ENCODE measurements at regions of chr2 and their contacts with region 1.

Region 1: GRCh38 chr2:85728883-85729824 is 24.6 kb upstream of the ATOH8 start:
- DNase-seq: peak; percentile 83 to 93
- ATAC-seq: peak; percentile 96 to 99
- H3K4me3 ChIP-seq: 0 out of 3 replicates have a peak overlapping the region, but pooled peaks have one; percentile 11
- H3K27ac ChIP-seq: peak overlapping the region; percentile 68 to 70
- H3K4me1 ChIP-seq: peaks cover 24% of the 10 kb centered on the region
- CTCF ChIP-seq: peak; percentile 99
- EP300 ChIP-seq: peak in 1 of 2 experiments; percentile 51; a peak in 1 of 5 replicates
- POLR2A ChIP-seq: no peak
- RAD21 ChIP-seq: peak; percentile 100

Region 2: DNA sequence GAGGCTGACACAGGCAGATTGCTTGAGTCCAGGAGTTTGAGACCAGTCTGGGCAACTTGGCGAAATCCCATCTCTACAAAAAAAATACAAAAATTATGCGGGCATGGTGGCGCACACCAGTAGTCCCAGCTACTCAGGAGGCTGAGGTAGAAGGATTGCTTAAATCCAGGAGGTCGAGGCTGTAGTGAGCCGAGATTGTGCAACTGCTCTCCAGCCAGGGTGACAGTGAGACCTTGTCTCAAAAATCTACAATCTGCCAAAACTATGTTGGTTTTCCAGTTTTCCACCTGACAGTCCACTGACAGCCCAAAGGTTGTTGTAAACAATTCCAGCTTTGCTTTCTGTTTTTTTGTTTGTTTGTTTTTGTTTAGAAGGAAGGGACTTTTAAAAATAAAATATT is 706.9 kb before region 1 on chr2:
- CTCF ChIA-PET with region 1: no interaction called
- POLR2A ChIA-PET with region 1: no interaction called
- DNase-seq: no peak
- ATAC-seq: no peak
- H3K4me3 ChIP-seq: no peak overlapping the region
- H3K27ac ChIP-seq: no peak overlapping the region
- H3K4me1 ChIP-seq: peaks cover 31% of the 10 kb centered on the region
- CTCF ChIP-seq: no peak
- EP300 ChIP-seq: no peak
- POLR2A ChIP-seq: no peak
- RAD21 ChIP-seq: no peak

Region 3: GRCh38 chr2:85490861-85491755 is 238.0 kb before region 1 on chr2:
- CTCF ChIA-PET with region 1: no interaction called
- POLR2A ChIA-PET with region 1: no interaction called
- DNase-seq: no peak
- ATAC-seq: peak; percentile 24 to 70; a peak in 3 of 6 replicates
- H3K4me3 ChIP-seq: no peak overlapping the region
- H3K27ac ChIP-seq: peak overlapping the region in 1 of 2 experiments; percentile 34; a peak in 2 of 6 replicates
- H3K4me1 ChIP-seq: peaks cover 2% of the 10 kb centered on the region; the same call in 2 of the 3 replicates
- CTCF ChIP-seq: no peak
- EP300 ChIP-seq: no peak
- POLR2A ChIP-seq: no peak
- RAD21 ChIP-seq: no peak

Region 4: DNA sequence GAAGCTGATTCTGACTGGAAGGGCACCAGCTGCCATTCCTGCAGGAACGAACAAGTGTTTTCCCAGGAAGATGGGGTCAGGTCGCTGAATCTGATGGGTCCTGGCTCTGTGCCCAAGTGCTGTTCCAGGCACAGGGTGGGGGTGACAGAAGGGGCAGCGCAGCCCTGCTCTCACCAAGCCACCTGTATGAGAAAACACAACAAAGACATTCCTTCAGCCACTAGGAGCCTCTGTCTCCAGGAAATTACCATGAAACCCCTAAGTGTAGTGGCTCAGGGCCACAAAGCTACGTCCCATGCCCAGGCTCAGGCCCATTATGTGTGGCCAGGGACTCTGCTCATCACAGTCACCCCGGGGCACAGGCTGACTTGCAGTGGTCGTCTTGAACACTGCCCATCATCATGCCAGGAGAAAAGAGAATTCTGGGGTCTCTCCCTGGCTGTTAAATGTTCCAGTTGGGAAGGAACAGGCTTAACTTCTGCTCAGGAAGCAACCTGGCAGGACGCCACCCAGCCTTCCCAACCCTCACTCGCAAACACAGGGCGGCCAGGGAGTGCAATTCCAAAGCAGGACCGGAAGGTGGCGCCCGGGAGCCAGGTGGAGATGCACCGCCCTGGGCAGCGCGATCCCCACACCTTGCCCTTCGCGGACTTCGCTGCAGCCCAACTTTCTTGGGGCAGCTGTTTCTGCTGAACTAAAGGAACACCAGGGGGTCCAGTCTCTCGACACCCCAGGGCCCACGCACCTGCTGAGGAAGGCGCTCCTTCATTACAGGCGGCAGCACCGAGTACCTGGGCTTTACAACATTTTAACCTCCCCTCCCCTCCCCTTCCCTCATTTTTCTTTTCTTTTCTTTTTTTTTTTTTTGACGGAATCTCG is 50.1 kb before region 1 on chr2:
- CTCF ChIA-PET with region 1: interaction called, 27 read pairs
- POLR2A ChIA-PET with region 1: no interaction called
- DNase-seq: peak; percentile 80 to 94
- ATAC-seq: peak; percentile 81 to 97
- H3K4me3 ChIP-seq: no peak overlapping the region
- H3K27ac ChIP-seq: peak overlapping the region; percentile 70 to 73
- H3K4me1 ChIP-seq: peaks cover 26% of the 10 kb centered on the region
- CTCF ChIP-seq: peak; percentile 94
- EP300 ChIP-seq: no peak
- POLR2A ChIP-seq: no peak
- RAD21 ChIP-seq: peak; percentile 91 to 97

Region 5: DNA sequence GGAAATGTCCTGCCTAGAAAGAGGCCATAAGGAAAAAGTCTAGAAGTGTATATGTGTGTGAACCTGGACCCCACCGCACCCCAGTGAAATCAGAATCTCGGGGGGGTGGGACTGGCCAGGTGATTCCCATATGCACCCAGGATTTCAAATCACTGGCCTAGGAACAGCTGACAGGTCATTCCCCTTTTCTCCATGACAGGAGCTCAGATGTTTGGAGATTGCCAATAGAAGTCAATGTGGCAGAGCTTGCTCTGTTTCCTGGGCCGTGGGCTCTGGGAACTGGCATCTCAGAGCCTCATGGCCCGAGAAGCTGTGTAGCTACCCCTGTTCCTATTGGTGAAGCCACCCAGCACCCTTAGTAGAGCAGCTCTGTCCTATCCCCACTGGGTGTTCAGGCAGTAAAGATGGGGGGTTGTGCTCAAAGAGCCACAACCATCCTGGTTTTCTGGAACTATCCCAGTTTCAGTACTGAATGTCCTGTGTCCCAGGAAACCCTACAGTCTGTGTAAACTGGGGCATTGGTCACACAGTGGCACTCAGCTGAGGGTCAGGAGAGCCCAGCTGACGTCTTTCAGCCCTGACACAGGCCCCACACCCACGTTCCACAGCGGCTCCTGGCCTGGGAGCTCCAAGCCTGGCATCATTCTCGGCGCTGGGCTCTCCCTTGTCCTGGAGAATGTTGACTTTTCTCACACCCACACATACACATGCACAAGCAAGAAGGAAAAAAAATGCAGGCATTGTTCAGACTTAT is 16.1 kb before region 1 on chr2:
- CTCF ChIA-PET with region 1: interaction called, 122 read pairs
- POLR2A ChIA-PET with region 1: no interaction called
- DNase-seq: peak in 1 of 2 experiments; percentile 54
- ATAC-seq: peak; percentile 35 to 43; a peak in 3 of 6 replicates
- H3K4me3 ChIP-seq: no peak overlapping the region
- H3K27ac ChIP-seq: peak overlapping the region; percentile 11 to 68; a peak in 2 of 6 replicates
- H3K4me1 ChIP-seq: peaks cover 16% of the 10 kb centered on the region; the same call in 2 of the 3 replicates
- CTCF ChIP-seq: no peak
- EP300 ChIP-seq: no peak
- POLR2A ChIP-seq: no peak
- RAD21 ChIP-seq: no peak

Region 6: DNA sequence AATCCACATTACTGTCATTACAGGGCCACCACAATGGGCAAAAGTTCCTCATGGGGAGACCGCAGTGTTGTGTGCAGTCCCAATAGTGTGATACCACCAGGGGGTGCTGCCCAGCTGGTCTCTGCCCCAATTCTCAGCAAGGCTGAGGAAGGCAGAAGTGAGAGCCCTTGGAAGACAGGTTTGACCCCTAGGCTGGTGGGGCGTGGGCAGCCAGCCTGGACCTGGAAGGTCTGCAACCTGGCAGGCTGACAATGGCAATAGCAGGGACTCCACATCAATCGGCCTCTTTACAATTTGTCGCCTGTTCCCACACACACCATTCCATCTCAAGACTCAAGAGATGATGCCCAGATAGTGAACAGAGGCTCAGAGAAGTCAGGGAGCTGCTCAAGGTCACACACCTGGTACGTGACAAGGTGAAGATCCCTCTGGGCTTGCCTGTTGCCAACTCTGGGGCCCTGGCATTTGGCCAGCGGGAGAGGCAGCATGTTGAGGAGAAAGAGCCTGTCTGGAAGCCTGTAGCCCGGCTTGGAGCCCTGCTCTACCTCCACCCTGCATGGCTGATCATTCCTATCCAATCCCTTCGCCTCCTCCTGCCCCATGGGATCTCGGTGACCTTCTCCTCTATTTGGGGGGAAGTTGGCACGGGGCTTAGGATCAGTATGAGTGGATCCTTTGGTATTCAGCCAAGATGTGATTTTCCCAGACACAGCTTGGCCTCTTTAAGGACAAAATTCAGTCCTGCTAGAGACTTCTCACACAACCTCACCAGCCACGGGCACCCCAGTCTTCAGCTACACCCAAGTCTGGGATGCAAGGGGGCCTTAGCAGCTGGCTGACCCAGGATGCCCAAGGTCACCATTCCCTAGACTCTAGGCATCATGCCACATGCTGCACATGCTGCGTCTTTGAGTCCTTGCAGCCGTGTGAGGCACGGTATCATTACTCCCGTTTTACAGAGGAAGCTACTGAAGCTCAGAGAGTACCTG is 21.7 kb after region 1 on chr2:
- CTCF ChIA-PET with region 1: interaction called, 177 read pairs
- POLR2A ChIA-PET with region 1: no interaction called
- DNase-seq: peak; percentile 72 to 87
- ATAC-seq: peak; percentile 35 to 76; a peak in 5 of 6 replicates
- H3K4me3 ChIP-seq: no peak overlapping the region
- H3K27ac ChIP-seq: peak overlapping the region; percentile 29 to 61; a peak in 5 of 6 replicates
- H3K4me1 ChIP-seq: peaks cover 41% of the 10 kb centered on the region
- CTCF ChIP-seq: peak; percentile 89
- EP300 ChIP-seq: no peak
- POLR2A ChIP-seq: no peak
- RAD21 ChIP-seq: peak; percentile 90 to 95

Region 7: GRCh38 chr2:85785027-85785822 is 56.1 kb after region 1 on chr2:
- CTCF ChIA-PET with region 1: interaction called, 20 read pairs
- POLR2A ChIA-PET with region 1: no interaction called
- DNase-seq: no peak
- ATAC-seq: peak in 1 of 2 experiments; percentile 4; a peak in 2 of 6 replicates
- H3K4me3 ChIP-seq: no peak overlapping the region
- H3K27ac ChIP-seq: no peak overlapping the region
- H3K4me1 ChIP-seq: peaks cover 10% of the 10 kb centered on the region; the same call in 2 of the 3 replicates
- CTCF ChIP-seq: no peak
- EP300 ChIP-seq: no peak
- POLR2A ChIP-seq: no peak
- RAD21 ChIP-seq: no peak

Region 8: DNA sequence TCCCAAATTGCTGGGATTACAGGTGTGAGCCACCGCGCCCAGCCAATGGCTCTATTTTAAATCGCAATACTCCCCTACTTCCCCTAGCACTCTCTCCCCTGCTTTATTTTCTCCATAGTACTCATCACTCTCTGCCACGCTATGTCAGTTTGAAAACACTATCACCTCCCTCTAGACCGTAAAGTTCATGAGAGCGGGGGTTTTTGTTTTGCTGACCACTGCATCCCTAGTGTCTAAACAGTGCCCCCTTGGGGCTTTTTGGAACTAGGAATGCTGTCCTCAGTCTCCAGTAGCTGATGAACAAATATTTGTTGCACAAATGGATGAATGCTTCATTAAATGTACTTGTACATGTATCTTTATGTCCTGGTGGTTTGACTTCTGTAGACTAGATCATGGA is 68.8 kb after region 1 on chr2:
- CTCF ChIA-PET with region 1: interaction called, 1,675 read pairs
- POLR2A ChIA-PET with region 1: no interaction called
- DNase-seq: peak; percentile 26 to 43
- ATAC-seq: peak in 1 of 2 experiments; percentile 46; a peak in 2 of 6 replicates
- H3K4me3 ChIP-seq: no peak overlapping the region
- H3K27ac ChIP-seq: peak overlapping the region in 1 of 2 experiments; percentile 6; a peak in 2 of 6 replicates
- H3K4me1 ChIP-seq: peaks cover 43% of the 10 kb centered on the region
- CTCF ChIP-seq: peak; percentile 44
- EP300 ChIP-seq: no peak
- POLR2A ChIP-seq: no peak
- RAD21 ChIP-seq: peak; percentile 64 to 75

Region 9: DNA sequence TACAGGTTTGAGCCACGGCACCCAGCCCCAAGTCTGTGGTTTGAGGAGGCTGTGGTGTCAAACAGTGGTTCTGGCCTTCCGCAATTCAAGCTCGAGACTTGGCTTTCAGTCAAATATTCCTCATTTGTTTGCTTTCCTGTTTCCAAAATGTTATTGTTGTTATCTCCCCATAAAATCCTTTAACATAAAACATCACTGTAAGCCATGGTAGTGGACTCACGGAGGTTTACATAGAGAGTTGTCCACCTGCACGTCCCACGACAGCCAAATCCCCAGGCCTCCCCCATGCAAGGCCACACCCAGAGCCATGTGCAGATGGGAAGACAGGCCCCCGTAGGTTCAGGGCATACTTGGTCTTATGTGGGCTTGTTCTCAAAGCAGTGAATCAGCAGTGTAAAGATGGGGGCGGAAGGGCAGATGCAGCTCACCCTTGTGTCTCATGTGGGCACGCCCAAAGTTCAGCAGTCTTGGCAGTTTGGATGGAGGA is 178.6 kb after region 1 on chr2:
- CTCF ChIA-PET with region 1: no interaction called
- POLR2A ChIA-PET with region 1: no interaction called
- DNase-seq: peak in 1 of 2 experiments; percentile 54
- ATAC-seq: peak in 1 of 2 experiments; percentile 40; a peak in 3 of 6 replicates
- H3K4me3 ChIP-seq: no peak overlapping the region
- H3K27ac ChIP-seq: peak overlapping the region in 1 of 2 experiments; percentile 51; a peak in 3 of 6 replicates
- H3K4me1 ChIP-seq: peaks cover 49% of the 10 kb centered on the region
- CTCF ChIP-seq: no peak
- EP300 ChIP-seq: no peak
- POLR2A ChIP-seq: no peak
- RAD21 ChIP-seq: no peak

Measured in A549 (cell line).